Right ventricle myocardium inferior (tissue), 1 donor: ENCODE measurements at regions of chr16 and their contacts with region 1.

Region 1: GRCh38 chr16:72989579-72990551 is 58.1 kb downstream of the ZFHX3 start:
- DNase-seq: no peak
- ATAC-seq: peak; percentile 73

Region 2: GRCh38 chr16:72832621-72833248 is 157.1 kb before region 1 on chr16:
- intact Hi-C with region 1: loop called (anchors 5 kb)
- DNase-seq: peak; percentile 91
- ATAC-seq: peak; percentile 93

Region 3: GRCh38 chr16:72952811-72953595 is 36.9 kb before region 1 on chr16:
- intact Hi-C with region 1: no loop called
- DNase-seq: no peak
- ATAC-seq: peak; percentile 31

Region 4: DNA sequence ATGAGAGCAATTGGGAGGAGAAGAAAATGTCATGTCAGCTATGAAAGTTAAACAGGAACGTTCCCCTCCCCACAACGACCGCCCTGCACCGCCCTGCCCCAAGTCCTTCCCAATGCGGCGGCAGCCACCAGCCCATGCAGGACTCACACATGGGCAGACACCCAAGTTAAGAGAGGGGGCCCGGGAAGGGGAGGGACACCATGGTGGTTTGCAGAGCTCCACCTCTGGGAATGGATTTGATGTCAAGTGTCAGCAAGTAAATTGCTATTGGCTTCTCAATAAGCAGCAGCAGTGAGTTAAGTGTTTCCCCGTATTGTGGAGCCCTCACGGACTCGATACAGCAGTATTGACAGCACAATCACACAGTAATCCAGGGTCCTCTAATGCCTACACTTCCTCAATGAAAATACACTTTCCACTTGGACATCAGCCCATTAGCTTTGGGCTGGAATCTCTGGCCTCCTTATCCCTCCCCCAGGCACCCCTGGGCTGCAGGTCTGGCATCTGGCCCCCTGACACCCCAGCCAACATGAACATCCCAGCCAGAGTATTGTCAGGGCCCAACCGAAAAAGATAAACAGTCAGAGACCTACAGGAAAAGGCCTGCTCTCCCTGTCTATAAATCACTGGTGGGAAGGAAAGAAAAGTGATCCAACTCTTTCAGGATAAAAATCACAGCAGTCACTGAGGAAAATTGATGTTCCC is 35.4 kb after region 1 on chr16:
- intact Hi-C with region 1: loop called (anchors 5 kb)
- DNase-seq: no peak
- ATAC-seq: peak; percentile 51

Region 5: DNA sequence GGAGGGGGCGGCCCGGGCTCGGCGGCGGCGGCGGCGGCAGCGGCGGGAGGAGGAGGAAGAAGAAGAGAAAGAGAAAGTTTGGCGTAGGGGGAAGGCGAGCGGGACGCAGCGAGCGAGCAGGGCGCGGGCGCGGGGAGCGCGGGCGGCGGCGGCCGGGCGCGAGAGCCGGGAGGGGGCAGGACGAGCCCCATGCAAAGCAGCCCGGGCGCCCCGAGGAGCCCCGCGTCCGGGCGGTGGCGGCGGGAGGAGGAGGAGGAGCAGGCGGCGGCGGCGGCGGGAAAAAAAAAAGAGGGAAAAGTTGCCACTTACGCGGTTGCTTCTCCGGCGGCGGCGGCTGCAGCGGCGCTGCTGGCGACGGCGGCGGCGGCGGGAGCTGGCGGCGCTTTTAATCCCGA is 68.4 kb after region 1 on chr16:
- intact Hi-C with region 1: loop called (anchors 5 kb)
- DNase-seq: no peak
- ATAC-seq: peak; percentile 24

Region 6: DNA sequence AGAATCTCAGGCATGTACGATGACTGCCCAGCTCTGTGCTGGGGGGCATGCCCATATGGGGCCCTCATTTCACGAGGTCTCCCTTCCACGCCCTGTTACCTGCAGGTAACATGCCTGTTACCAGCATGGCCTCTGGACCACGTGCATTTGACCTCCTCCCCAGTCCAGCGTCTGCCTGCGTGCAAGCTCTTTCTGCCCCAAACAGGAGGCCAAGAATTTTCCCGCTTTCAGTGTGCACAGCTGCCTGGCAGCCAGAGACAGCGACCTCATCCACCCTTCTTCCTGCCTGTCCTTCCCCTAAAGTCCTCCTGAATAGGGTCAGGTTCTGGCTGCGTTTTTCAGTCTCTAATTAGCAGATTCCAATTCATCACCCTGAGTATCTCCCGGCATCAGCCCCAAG is 364.6 kb after region 1 on chr16:
- intact Hi-C with region 1: no loop called
- DNase-seq: no peak
- ATAC-seq: no peak